ENCODE measurements at regions of chr6 and their contacts with region 1.

Region 1: GRCh38 chr6:83067448-83068413 is at the start of gene DOP1A:
- DNase-seq: peak; percentile 81
- H3K4me3 ChIP-seq: peak within 1 kb of the TSS; percentile 85
- H3K27ac ChIP-seq: no peak within 1 kb of the TSS
- H3K27me3 ChIP-seq: no peaks in the 10 kb centered on the region
- CTCF ChIP-seq: peak; percentile 99
- polyA plus RNA-seq, gene DOP1A: 11.3 and 14.6 TPM in 2 replicates

Region 2: GRCh38 chr6:82247634-82248232 is 820.0 kb before region 1 on chr6 and contains the start of gene IBTK:
- CTCF ChIA-PET with region 1: interaction called, 93 read pairs
- POLR2A ChIA-PET with region 1: interaction called, 4 read pairs
- DNase-seq: peak; percentile 73
- H3K4me3 ChIP-seq: peak within 1 kb of the TSS; percentile 78
- H3K27ac ChIP-seq: peak within 1 kb of the TSS; percentile 94
- H3K27me3 ChIP-seq: no peaks in the 10 kb centered on the region
- CTCF ChIP-seq: no peak
- polyA plus RNA-seq, gene IBTK: 26.5 and 39.8 TPM in 2 replicates

Region 3: DNA sequence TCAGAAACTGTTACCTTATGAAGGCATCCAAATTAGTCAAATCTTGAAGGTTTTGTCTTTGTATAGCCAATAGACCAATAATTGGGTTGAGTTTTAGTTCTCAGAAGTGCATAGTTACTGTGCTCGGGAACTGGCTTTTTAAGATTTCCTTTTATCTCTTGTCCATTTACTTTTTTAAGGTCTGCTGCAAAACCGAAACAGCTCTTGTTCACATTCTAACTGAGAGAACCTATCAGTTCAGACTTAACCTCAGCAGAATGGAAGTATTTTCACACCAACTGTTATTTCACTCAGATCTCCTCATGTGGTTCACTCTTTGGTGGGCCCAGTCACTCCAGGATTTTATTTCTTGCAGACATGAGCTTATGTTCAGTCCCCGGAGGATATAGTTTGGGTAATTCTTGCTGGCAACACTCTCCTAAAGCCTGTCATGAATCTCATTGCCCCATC is 648.6 kb before region 1 on chr6:
- CTCF ChIA-PET with region 1: no interaction called
- POLR2A ChIA-PET with region 1: no interaction called
- DNase-seq: no peak
- H3K4me3 ChIP-seq: no peak overlapping the region
- H3K27ac ChIP-seq: no peak overlapping the region
- H3K27me3 ChIP-seq: no peaks in the 10 kb centered on the region
- CTCF ChIP-seq: no peak

Region 4: GRCh38 chr6:83047065-83047754 is 20.5 kb before region 1 on chr6:
- CTCF ChIA-PET with region 1: interaction called, 79 read pairs
- POLR2A ChIA-PET with region 1: no interaction called
- DNase-seq: no peak
- H3K4me3 ChIP-seq: no peak overlapping the region
- H3K27ac ChIP-seq: no peak overlapping the region
- H3K27me3 ChIP-seq: no peaks in the 10 kb centered on the region
- CTCF ChIP-seq: no peak

Region 5: DNA sequence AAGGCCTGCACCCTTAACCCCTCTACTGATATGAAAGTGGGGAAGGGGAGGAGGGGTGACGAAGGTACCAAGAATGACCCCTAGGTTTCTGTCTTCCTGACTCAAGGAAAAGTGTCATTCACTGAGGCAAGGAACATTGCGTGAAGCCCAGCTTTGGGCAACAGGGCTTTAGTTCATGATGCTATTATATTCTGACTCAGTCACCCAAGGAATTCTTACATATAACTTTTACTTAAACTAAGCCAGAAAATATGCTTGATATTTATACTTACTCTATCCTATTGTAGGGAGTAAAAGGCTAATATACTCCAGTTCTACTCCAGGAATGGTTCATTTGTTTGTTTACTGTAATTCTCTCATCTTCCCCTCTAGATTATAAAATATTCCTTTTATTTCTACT is 60.2 kb after region 1 on chr6:
- CTCF ChIA-PET with region 1: interaction called, 21 read pairs
- POLR2A ChIA-PET with region 1: no interaction called
- DNase-seq: peak; percentile 10
- H3K4me3 ChIP-seq: no peak overlapping the region
- H3K27ac ChIP-seq: peak overlapping the region; percentile 75
- H3K27me3 ChIP-seq: no peaks in the 10 kb centered on the region
- CTCF ChIP-seq: no peak

Region 6: GRCh38 chr6:83183082-83183828 is 115.5 kb after region 1 on chr6:
- CTCF ChIA-PET with region 1: interaction called, 62 read pairs
- POLR2A ChIA-PET with region 1: interaction called, 4 read pairs
- DNase-seq: peak; percentile 47
- H3K4me3 ChIP-seq: no peak overlapping the region
- H3K27ac ChIP-seq: peak overlapping the region; percentile 25
- H3K27me3 ChIP-seq: no peaks in the 10 kb centered on the region
- CTCF ChIP-seq: no peak

Region 7: DNA sequence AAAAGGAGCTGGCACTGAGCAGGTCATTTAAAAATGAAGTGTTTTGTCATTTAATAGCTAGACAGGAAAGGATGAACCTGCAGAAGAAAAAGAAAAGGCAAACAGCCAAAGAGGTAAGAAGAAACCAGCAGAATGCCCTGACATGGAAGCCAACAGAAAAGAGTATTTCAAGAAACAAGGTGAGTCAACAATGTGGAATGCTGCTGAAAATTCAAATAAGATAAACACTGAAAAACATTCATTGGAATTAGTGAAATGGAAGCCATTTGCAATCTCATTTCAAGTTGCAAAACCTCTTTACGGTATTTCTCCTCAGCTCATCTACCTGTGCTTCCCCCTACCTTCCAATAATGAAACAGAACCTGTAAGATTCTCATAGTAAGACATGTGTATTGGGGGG is 185.0 kb after region 1 on chr6:
- CTCF ChIA-PET with region 1: interaction called, 11 read pairs
- POLR2A ChIA-PET with region 1: no interaction called
- DNase-seq: peak; percentile 51
- H3K4me3 ChIP-seq: no peak overlapping the region
- H3K27ac ChIP-seq: no peak overlapping the region
- H3K27me3 ChIP-seq: no peaks in the 10 kb centered on the region
- CTCF ChIP-seq: no peak

Region 8: DNA sequence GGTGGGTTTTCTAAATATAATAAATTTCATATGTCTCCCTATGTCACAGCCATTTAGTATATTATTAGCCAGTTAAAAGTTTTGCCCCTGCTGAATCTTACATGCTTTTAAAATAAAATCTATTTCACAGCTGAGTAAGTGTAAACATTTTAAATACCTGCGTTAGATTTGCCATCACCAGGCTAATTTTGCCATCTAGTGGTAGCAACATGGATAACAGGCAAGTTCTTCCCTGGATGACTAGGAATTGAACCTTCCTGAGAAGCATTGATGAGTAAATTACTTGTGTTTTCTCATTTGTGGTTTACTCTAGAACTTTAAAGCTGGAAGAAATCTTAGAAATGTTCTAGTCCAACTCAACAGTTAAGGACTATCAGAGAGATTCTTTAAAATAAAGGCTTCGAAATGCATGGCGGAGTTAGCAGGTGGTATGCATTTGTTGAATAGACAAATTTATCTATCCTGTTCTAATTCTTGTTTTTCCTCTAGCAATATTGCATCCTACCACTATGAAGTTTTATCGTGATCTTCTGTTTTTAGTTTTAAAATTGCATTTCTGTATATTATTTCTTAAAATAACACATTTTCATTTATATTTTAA is 447.2 kb after region 1 on chr6:
- CTCF ChIA-PET with region 1: interaction called, 384 read pairs
- POLR2A ChIA-PET with region 1: interaction called, 5 read pairs
- DNase-seq: peak; percentile 63
- H3K4me3 ChIP-seq: no peak overlapping the region
- H3K27ac ChIP-seq: no peak overlapping the region
- H3K27me3 ChIP-seq: no peaks in the 10 kb centered on the region
- CTCF ChIP-seq: peak; percentile 90

Measured in AG04450 (cell line).